ENCODE measurements at regions of chr5 and their contacts with region 1.

Region 1: GRCh38 chr5:54159153-54159892 is 151.1 kb downstream of the ARL15 start:
- DNase-seq: no peak
- H3K4me3 Mint-ChIP-seq: no peak overlapping the region
- H3K27ac Mint-ChIP-seq: no peak overlapping the region
- H3K4me1 Mint-ChIP-seq: no peaks in the 10 kb centered on the region
- H3K27me3 Mint-ChIP-seq: no peaks in the 10 kb centered on the region

Region 2: DNA sequence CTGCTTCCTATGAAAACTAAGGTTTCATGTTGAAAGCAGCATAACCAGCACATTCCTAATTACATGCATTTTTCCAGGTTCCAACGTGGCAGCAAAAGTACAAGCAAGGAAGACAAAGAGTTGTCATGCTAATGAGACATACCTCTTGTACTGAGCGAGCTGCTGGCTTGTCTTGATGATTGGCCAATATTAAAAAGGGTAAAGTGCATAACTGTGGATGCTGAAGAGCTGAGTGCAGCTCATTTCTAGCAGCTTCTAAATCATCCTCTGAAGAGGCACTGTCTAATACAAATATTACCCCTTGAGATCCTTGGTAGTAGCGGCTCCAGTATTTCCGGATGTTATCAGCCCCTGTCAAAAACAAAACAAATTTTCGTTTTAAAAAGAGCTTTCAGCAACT is 46.3 kb before region 1 on chr5:
- CTCF ChIA-PET with region 1: no interaction called
- intact Hi-C with region 1: loop called (anchors 1 kb)
- DNase-seq: no peak
- H3K4me3 Mint-ChIP-seq: no peak overlapping the region
- H3K27ac Mint-ChIP-seq: no peak overlapping the region
- H3K4me1 Mint-ChIP-seq: no peaks in the 10 kb centered on the region
- H3K27me3 Mint-ChIP-seq: no peaks in the 10 kb centered on the region

Region 3: GRCh38 chr5:54194318-54194717 is 35.0 kb after region 1 on chr5:
- CTCF ChIA-PET with region 1: no interaction called
- intact Hi-C with region 1: no loop called
- DNase-seq: no peak
- H3K4me3 Mint-ChIP-seq: no peak overlapping the region
- H3K27ac Mint-ChIP-seq: no peak overlapping the region
- H3K4me1 Mint-ChIP-seq: peaks cover 7% of the 10 kb centered on the region
- H3K27me3 Mint-ChIP-seq: no peaks in the 10 kb centered on the region

Region 4: DNA sequence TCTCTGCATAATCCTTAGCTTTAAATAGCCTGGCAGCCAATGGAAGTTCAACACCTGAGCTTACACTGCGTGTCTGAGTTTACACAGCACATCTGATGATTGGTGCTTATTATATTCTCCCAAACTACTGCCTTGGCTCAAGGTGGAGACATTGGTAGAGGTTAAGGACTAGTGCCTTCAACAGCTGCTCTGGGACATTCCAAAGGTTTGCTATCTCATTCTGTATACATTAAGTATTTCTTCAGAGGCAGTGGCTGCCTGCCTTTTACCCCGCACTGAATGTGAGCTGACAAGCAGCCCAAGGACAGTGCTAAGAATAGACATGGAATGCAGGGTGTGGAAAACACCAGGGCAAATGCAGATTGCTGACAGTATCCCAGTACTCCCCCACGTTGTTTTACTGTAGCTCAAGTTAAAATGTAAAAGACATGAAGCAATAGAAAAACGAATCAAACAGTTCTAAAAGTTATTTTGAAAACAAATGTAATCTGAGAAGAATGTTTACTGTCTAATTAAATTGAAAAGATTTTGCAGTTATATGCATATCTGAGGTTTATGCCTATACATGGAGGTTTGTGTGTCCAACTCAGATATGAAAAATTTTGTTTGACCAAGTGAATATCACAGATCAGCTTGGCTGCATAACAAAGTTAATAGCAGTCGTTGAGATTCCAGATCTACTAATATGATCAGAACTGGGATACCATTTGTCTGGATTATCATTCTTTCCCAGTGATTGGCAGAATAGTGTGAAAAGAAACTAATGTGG is 298.0 kb after region 1 on chr5:
- CTCF ChIA-PET with region 1: no interaction called
- intact Hi-C with region 1: no loop called
- DNase-seq: no peak
- H3K4me3 Mint-ChIP-seq: no peak overlapping the region
- H3K27ac Mint-ChIP-seq: no peak overlapping the region
- H3K4me1 Mint-ChIP-seq: no peaks in the 10 kb centered on the region
- H3K27me3 Mint-ChIP-seq: no peaks in the 10 kb centered on the region